ENCODE measurements at regions of chr16 and their contacts with region 1.

Region 1: DNA sequence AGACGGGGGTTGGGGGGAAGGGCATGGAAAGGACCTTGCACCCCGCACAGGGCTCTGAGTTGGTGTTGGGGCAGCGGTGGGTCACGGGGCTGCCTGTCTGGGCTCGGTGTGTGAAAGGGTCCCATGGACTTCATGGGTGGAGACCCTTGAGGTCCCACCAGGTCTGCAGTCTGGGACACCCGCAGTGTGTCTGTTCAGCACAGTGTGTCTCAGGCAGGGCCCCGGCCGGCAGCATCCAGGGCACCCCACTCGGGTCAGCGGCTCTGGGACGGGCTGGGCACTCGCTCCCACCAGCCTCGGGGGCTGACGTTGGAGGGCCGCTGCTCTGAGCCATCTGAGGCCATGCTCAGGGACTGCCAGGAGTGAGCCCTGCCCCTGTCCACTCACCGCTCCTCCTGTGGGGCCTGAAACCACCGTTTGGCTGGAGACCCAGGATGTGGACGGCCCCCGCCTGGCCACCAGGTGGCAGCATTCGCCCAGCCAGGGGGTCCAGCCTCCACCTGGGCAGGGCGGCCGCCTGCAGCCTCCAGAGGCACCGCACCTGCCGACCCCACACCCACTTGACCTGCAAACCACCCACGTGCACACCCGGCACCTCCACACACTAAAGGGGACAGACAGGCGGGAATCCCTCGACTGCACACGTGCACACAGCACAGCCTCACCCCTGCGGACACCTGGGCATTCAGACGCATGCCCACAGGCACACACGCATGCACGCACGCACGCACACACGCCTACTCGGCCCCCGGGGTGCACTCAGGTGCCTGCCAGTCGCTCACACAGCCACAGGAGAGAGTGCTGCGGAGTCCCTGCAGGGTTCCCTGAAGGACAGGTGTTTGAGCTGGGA is 10.1 kb upstream of the ZFPM1 start:
- DNase-seq: peak in 1 of 2 donors; percentile 78
- H3K4me3 ChIP-seq: no peak overlapping the region
- H3K27ac ChIP-seq: no peak overlapping the region
- H3K4me1 ChIP-seq: peaks cover 0 to 3% of the 10 kb centered on the region in 2 donors
- H3K27me3 ChIP-seq: no peaks in the 10 kb centered on the region
- CTCF ChIP-seq: peak; percentile 92 to 98 (median 95)

Region 2: GRCh38 chr16:88505405-88506082 is 62.6 kb after region 1 on chr16:
- intact Hi-C with region 1: loop called (anchors 5 kb)
- DNase-seq: no peak
- H3K4me3 ChIP-seq: no peak overlapping the region
- H3K27ac ChIP-seq: no peak overlapping the region
- H3K4me1 ChIP-seq: no peaks in the 10 kb centered on the region
- H3K27me3 ChIP-seq: no peaks in the 10 kb centered on the region
- CTCF ChIP-seq: peak in 2 of 3 experiments; percentile 5 to 40

Region 3: DNA sequence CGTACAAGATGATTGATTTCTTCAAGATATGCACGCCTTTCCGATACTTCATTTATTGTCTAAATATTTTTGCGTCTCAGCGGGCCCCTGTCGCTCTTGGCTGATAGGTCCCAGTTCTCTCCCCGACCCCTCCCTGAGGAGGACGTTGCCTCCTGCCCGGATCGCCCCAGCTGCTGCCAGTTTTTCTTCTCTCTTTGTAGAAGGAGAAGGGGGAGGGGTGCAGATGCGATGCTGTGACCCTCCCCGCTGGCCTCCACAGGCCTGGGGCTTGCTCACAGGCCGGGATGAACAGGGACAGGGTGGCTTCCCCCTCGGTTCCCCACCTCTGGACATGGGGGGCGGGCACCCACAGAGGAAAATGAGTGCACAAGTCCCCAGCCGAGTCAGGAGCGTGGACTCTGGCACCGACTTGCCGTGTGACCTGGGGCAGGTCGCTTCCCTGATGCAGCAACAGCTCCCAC is 73.7 kb after region 1 on chr16:
- intact Hi-C with region 1: no loop called
- DNase-seq: no peak
- H3K4me3 ChIP-seq: no peak overlapping the region
- H3K27ac ChIP-seq: no peak overlapping the region
- H3K4me1 ChIP-seq: no peaks in the 10 kb centered on the region
- H3K27me3 ChIP-seq: no peaks in the 10 kb centered on the region
- CTCF ChIP-seq: no peak

Region 4: GRCh38 chr16:88527186-88527936 is 84.4 kb after region 1 on chr16:
- intact Hi-C with region 1: loop called (anchors 1 kb)
- DNase-seq: peak in 1 of 2 donors; percentile 78
- H3K4me3 ChIP-seq: no peak overlapping the region
- H3K27ac ChIP-seq: no peak overlapping the region
- H3K4me1 ChIP-seq: peaks cover 0 to 2% of the 10 kb centered on the region in 2 donors
- H3K27me3 ChIP-seq: no peaks in the 10 kb centered on the region
- CTCF ChIP-seq: peak; percentile 76 to 88 (median 78)

Region 5: GRCh38 chr16:88561485-88562369 is 118.8 kb after region 1 on chr16:
- intact Hi-C with region 1: loop called (anchors 1 kb)
- DNase-seq: no peak
- H3K4me3 ChIP-seq: peak overlapping the region; percentile 39 to 66
- H3K27ac ChIP-seq: peak overlapping the region in 1 of 2 donors; percentile 21
- H3K4me1 ChIP-seq: peaks cover 0 to 5% of the 10 kb centered on the region in 2 donors
- H3K27me3 ChIP-seq: no peaks in the 10 kb centered on the region
- CTCF ChIP-seq: peak; percentile 36 to 79 (median 61)

Measured in ascending aorta (tissue), 2 donors.